ENCODE measurements at regions of chr3 and their contacts with region 1.

Region 1: GRCh38 chr3:47324278-47324865 is 41.6 kb downstream of the KLHL18 start:
- DNase-seq: peak; percentile 61 to 72
- H3K4me3 ChIP-seq: no peak overlapping the region
- H3K27ac ChIP-seq: no peak overlapping the region
- H3K4me1 ChIP-seq: peaks cover 16% of the 10 kb centered on the region
- H3K27me3 ChIP-seq: no peaks in the 10 kb centered on the region
- CTCF ChIP-seq: peak; percentile 76

Region 2: GRCh38 chr3:46866720-46867549 is 457.4 kb before region 1 on chr3:
- CTCF ChIA-PET with region 1: interaction called, 3 read pairs
- POLR2A ChIA-PET with region 1: no interaction called
- intact Hi-C with region 1: loop called (anchors 10 kb)
- DNase-seq: peak in 1 of 2 experiments; percentile 65
- H3K4me3 ChIP-seq: no peak overlapping the region
- H3K27ac ChIP-seq: no peak overlapping the region
- H3K4me1 ChIP-seq: no peaks in the 10 kb centered on the region
- H3K27me3 ChIP-seq: no peaks in the 10 kb centered on the region
- CTCF ChIP-seq: peak; percentile 90

Region 3: DNA sequence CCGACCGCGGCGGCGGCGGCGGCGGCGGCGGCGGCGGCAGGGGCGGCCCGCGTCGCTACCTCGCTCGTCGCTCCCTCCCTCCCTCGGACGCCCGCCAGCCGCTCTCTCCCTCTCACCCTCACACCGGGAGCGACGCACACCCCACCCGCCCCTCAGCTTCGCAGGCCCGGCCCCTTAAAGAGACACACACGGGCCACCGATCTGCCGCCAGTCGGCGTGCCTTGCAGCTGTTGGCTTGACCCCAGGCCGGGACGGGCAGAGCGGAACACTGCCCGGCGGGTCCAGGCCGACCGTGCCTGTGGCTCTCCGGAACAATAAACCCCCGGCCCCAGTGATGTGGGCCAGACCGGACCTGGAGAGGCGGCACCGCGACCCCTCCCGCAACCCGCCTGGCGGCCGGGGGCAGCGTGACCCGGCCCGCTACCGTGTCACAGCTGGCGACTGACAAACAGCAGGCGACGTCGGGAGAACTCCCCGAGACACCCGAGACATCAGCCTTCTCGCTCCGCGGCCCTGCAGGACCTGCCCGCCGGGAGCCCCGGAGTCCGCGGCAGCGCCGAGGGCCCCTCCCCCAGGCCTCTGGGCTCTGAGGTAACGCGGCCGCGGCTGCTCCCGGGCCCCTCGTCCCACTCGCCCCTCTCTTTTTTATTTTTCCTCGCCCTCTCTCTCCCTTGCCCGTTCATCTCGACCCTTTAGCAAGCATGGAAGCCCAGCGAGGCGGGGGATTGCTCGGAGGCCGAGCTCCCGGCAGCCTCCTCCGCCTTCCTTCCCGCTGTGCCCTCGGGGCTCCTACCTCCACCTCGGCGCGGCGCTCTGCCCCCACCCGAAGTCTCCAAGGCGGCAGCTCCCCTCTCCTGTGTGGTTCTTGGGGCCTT is 160.1 kb before region 1 on chr3 and contains the start of gene SETD2:
- CTCF ChIA-PET with region 1: no interaction called
- POLR2A ChIA-PET with region 1: no interaction called
- intact Hi-C with region 1: loop called (anchors 5 kb)
- DNase-seq: peak; percentile 74 to 88
- H3K4me3 ChIP-seq: peak within 1 kb of the TSS; percentile 71
- H3K27ac ChIP-seq: peak within 1 kb of the TSS; percentile 47
- H3K4me1 ChIP-seq: peaks cover 28% of the 10 kb centered on the region
- H3K27me3 ChIP-seq: no peaks in the 10 kb centered on the region
- CTCF ChIP-seq: no peak
- total RNA-seq, gene SETD2: 37.0 and 47.7 TPM in 2 replicates

Region 4: DNA sequence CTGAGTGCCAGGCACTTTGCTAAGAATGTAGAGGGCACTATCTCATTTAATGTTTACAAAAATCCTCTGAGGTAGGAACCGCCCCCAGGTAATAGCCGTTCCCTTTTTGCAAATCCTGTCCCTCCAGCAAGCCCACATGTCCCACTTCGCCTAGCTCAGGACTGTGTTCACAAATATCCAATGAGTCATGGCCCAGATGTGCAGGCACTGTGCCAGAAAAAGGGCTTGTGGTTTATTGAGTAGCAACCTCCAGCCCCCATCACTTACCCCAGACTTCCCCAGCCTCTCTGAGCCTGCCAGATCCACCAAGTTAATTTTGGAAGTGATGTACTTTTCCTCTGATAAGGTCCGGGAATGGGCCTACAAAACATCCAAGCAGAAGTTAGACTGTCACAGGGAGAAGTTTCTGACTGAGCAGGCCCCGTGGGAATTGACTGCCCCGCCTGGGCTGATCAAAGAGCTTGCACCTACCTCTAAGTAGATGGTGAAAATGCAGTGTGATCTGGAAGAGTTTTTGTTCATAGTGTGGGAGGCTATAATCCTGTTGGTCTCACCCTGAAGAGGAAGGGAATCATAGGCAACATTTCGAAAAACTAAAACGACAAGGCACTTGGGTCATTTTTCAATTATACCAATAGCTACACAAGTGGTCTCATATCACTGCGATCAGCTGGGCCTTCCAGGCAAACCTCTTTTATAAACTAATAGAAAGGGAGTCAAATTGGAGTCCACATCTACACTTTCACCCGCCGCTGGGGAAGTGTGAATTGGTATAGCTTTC is 57.5 kb before region 1 on chr3:
- CTCF ChIA-PET with region 1: interaction called, 4 read pairs
- POLR2A ChIA-PET with region 1: interaction called, 15 read pairs
- intact Hi-C with region 1: no loop called
- DNase-seq: peak; percentile 52 to 80
- H3K4me3 ChIP-seq: no peak overlapping the region
- H3K27ac ChIP-seq: no peak overlapping the region
- H3K4me1 ChIP-seq: no peaks in the 10 kb centered on the region
- H3K27me3 ChIP-seq: no peaks in the 10 kb centered on the region
- CTCF ChIP-seq: no peak

Region 5: GRCh38 chr3:47781685-47782445 is 457.5 kb after region 1 on chr3 and contains the start of gene SMARCC1:
- CTCF ChIA-PET with region 1: no interaction called
- POLR2A ChIA-PET with region 1: no interaction called
- intact Hi-C with region 1: loop called (anchors 5 kb)
- DNase-seq: peak; percentile 88 to 97
- H3K4me3 ChIP-seq: peak within 1 kb of the TSS; percentile 67
- H3K27ac ChIP-seq: peak within 1 kb of the TSS; percentile 77
- H3K4me1 ChIP-seq: peaks cover 20% of the 10 kb centered on the region
- H3K27me3 ChIP-seq: no peaks in the 10 kb centered on the region
- CTCF ChIP-seq: no peak
- total RNA-seq, gene SMARCC1: 88.1 and 130 TPM in 2 replicates